Testis (tissue), 5 donors: ENCODE measurements at regions of chr13 and their contacts with region 1.

Region 1: GRCh38 chr13:97109841-97110492 is 112.2 kb upstream of the MBNL2 start:
- DNase-seq: peak; percentile 91
- H3K4me3 ChIP-seq: peak overlapping the region; percentile 11 to 27
- H3K27ac ChIP-seq: peak overlapping the region in 1 of 2 donors; percentile 38
- H3K4me1 ChIP-seq: peaks cover 26% of the 10 kb centered on the region
- H3K27me3 ChIP-seq: no peaks in the 10 kb centered on the region
- CTCF ChIP-seq: peak; percentile 82 to 95 (median 94)
- POLR2A ChIP-seq: no peak

Region 2: DNA sequence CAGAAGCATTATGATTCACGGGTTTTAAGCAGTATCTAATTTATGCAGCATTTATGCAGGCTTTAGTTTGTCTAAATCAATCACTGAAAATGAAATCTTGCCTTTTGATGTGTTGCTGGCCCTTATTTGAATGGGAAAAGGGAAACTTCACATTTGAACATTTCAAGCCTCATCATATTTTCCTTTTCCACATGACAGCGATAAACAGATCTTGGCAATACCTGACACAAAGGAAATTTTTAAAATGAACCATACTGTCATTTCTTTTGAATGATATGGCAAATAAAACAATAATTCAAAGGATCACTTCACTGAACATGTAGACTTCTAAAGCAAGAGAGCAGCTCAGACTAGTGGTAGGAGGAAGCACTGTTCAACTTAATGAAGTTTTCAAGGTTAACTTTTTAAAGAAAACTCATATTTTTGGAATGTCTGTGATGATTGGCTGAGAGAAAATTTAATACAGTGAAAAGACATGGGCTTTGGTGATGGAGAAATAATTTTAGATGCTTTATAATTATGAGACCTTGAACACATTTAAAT is 313.8 kb before region 1 on chr13:
- intact Hi-C with region 1: no loop called
- DNase-seq: no peak
- H3K4me3 ChIP-seq: no peak overlapping the region
- H3K27ac ChIP-seq: no peak overlapping the region
- H3K4me1 ChIP-seq: no peaks in the 10 kb centered on the region
- H3K27me3 ChIP-seq: no peaks in the 10 kb centered on the region
- CTCF ChIP-seq: peak in 2 of 3 experiments; percentile 20 to 30
- POLR2A ChIP-seq: no peak

Region 3: GRCh38 chr13:97344265-97345175 is 234.6 kb after region 1 on chr13:
- intact Hi-C with region 1: loop called (anchors 5 kb)
- DNase-seq: peak; percentile 77
- H3K4me3 ChIP-seq: no peak overlapping the region
- H3K27ac ChIP-seq: peak overlapping the region in 1 of 2 donors; percentile 33
- H3K4me1 ChIP-seq: peaks cover 7% of the 10 kb centered on the region
- H3K27me3 ChIP-seq: no peaks in the 10 kb centered on the region
- CTCF ChIP-seq: peak; percentile 55 to 79 (median 60)
- POLR2A ChIP-seq: no peak

Region 4: GRCh38 chr13:97403893-97404750 is 294.2 kb after region 1 on chr13:
- intact Hi-C with region 1: no loop called
- DNase-seq: no peak
- H3K4me3 ChIP-seq: no peak overlapping the region
- H3K27ac ChIP-seq: no peak overlapping the region
- H3K4me1 ChIP-seq: no peaks in the 10 kb centered on the region
- H3K27me3 ChIP-seq: no peaks in the 10 kb centered on the region
- CTCF ChIP-seq: no peak
- POLR2A ChIP-seq: no peak

Region 5: DNA sequence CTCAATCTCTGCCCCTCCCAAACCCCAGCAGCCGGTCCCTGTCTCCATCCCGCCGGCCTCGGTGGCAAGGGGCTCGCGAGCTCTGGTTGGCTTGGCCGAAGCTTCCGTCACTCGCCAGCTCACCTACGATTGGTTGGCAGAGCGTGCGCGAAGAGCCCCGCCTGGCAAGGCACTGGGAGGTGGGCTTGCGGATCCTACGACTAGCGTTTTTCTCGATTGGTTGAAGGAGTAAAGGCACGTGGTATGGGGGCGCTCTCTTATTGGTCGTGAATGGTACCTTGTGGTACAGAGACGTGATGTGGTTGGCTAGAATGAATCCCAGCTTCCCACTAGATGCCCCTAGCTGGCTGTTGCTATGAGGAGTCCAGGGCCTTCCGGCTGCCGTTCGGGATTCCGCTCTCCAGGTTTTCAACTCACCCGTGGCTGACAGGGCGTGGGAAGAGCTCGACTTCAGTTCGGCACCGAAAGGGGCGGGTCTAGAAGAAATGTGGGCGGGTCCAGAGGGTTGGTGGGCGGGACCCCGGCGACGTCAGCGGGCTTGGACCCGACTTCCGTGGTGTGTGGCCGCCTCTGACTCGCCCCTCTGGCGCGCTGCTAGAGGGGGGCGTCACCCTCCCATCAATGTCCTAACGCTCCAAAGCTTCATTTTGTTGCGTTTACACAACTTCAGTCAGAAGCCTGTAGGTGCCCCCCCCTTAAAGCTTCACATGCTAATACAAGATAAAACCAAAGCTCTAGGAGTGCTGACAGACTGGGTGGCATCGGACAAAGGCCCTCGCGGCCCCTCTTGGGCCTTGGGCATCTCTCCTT is 323.2 kb after region 1 on chr13:
- intact Hi-C with region 1: loop called (anchors 10 kb)
- DNase-seq: peak; percentile 99
- H3K4me3 ChIP-seq: peak overlapping the region; percentile 89
- H3K27ac ChIP-seq: peak overlapping the region; percentile 97 to 100
- H3K4me1 ChIP-seq: peaks cover 6% of the 10 kb centered on the region
- H3K27me3 ChIP-seq: no peaks in the 10 kb centered on the region
- CTCF ChIP-seq: no peak
- POLR2A ChIP-seq: peak; percentile 47

Region 6: DNA sequence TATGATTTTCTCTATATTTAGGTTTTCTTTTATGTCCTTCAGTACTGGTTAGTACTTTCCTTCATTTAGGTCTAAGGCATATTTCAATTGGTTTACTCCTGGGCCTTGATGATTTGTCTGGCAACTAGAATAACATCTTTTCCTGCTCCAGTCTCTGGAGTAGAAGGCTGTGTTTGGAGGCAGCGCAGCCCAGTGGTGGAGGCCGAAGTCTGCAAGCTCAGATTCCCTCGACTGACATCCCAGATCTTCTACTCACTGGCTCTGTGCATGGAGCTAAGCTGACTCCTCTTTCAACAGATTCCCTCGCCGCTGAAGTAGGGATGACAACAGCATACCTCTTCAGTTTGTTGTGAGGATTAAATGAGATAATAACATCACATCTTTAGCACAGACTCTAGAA is 465.0 kb after region 1 on chr13:
- intact Hi-C with region 1: loop called (anchors 10 kb)
- DNase-seq: peak; percentile 40
- H3K4me3 ChIP-seq: no peak overlapping the region
- H3K27ac ChIP-seq: no peak overlapping the region
- H3K4me1 ChIP-seq: peaks cover 2% of the 10 kb centered on the region
- H3K27me3 ChIP-seq: no peaks in the 10 kb centered on the region
- CTCF ChIP-seq: no peak
- POLR2A ChIP-seq: no peak